Sigmoid colon (tissue), 7 donors: ENCODE measurements at regions of chrX and their contacts with region 1.

Region 1: DNA sequence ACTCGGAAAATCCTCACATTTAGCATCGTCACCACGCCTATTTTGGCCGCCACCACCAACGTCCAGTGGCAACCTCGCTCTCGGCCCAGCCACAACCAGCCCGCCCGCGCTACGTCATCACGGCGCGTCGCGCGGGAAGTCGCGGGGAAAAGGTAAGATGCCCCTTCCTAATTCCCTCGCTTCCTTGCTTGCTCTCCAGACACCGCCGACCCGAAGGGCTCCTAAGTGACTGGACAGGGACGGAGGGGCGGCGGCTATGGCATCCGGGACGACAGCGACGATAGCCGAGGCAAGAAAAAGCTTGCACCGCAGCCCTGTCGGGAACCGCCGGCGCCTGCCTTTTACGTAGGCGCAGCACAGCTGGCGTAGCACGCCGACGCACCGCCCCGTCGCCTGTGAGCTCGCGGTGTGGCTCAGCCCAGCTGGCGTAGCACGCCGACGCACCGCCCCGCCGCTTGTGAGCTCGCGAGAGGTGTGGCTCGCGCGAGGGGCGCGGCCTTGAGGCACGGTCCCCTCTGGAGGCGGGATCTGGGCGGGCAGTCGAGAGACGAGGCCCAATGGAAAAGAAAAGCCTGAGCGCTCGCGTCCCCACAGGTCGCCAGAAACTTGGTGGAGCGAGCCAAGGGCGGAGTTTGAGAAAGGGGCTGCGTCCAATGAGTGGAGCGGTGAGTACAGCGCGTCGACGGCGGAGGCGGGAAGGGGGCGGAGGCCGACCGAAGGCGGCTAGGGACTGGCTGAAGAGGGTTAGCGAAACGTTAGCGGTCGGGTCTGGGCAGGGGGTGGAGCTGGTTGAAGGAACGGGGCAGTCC is at the start of gene HDAC6:
- DNase-seq: peak; percentile 99
- H3K4me3 ChIP-seq: peak within 1 kb of the TSS; percentile 45 to 61 (median 56)
- H3K27ac ChIP-seq: peak within 1 kb of the TSS; percentile 86 to 93 (median 92)
- H3K4me1 ChIP-seq: peaks cover 0 to 8% (median 2%) of the 10 kb centered on the region in 4 donors
- H3K27me3 ChIP-seq: no peaks in the 10 kb centered on the region
- CTCF ChIP-seq: no peak
- EP300 ChIP-seq: peak in 1 of 4 donors; percentile 0
- POLR2A ChIP-seq: peak; percentile 20 to 30
- total RNA-seq, gene HDAC6: 39.6 to 110 (median 78.3) TPM

Region 2: DNA sequence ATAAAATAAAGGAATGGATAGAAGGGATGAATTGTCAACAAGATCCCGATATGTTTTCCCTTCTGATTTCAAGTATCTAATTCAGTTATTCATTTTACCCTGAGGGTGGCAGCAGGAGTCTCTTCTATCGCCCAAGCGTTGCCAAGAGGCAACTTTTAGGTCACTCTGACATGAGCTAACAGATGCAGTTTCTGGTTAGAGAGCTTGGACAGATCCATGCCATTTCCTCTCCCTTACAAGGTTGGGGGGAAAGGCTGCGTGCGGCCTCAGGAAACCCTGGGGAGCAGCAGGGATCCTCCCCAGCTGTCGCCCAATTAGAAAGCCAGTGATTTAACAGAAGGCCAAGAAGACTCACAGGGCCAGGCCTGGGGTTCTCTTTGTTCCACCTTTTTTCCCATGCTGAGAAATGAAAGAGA is 153.1 kb before region 1 on chrX:
- intact Hi-C with region 1: loop called (anchors 10 kb)
- DNase-seq: peak; percentile 74
- H3K4me3 ChIP-seq: no peak overlapping the region
- H3K27ac ChIP-seq: peak overlapping the region; percentile 17 to 67 (median 53)
- H3K4me1 ChIP-seq: no peaks in the 10 kb centered on the region
- H3K27me3 ChIP-seq: no peaks in the 10 kb centered on the region
- CTCF ChIP-seq: peak in 3 of 4 experiments; percentile 11 to 38 (median 21)
- EP300 ChIP-seq: no peak
- POLR2A ChIP-seq: no peak

Region 3: GRCh38 chrX:48696301-48697181 is 104.9 kb before region 1 on chrX and contains the start of gene SUV39H1:
- intact Hi-C with region 1: loop called (anchors 5 kb)
- DNase-seq: peak; percentile 94
- H3K4me3 ChIP-seq: peak within 1 kb of the TSS; percentile 42 to 74 (median 70)
- H3K27ac ChIP-seq: peak within 1 kb of the TSS; percentile 82 to 89 (median 88)
- H3K4me1 ChIP-seq: peaks cover 0 to 14% (median 12%) of the 10 kb centered on the region in 4 donors
- H3K27me3 ChIP-seq: no peaks in the 10 kb centered on the region
- CTCF ChIP-seq: no peak
- EP300 ChIP-seq: no peak
- POLR2A ChIP-seq: peak; percentile 71 to 75
- total RNA-seq, gene SUV39H1: 3.0 to 4.6 (median 3.7) TPM

Region 4: DNA sequence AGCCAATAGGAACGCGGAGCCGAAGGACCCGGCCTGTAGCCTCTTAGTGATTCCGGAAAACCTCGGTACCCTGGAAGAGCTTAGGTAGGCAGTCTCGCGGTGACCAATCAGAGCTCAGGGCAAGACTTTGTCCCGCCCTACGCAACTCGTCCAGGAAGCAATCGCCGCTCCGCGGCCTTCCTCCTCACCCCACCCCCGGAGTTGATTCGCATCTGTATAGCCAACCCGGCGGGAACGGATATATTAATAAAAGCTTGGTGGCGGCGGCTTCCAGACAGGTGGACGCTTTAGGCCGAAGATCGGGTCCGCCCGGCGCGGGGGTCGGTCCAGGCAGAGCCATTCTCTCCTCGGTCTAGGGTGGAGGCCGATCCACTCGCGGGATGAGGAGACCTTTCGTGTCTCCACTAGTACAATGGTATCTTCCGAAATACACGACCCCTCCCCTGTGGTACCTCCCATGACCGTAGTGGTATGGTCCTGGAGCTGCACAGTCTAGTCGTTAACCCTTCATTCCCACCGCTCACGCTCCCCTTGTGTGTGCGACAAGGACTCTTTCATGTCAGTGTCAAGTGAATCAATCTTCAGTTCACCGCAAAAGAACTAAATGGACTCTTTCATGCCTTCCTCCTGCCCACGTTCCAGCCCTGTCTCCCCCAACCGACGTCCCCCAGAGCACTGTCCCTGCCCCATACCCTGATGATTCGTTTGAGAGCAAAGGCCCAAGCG is 64.1 kb before region 1 on chrX:
- intact Hi-C with region 1: loop called (anchors 1 kb)
- DNase-seq: peak; percentile 97
- H3K4me3 ChIP-seq: peak overlapping the region; percentile 37 to 61 (median 56)
- H3K27ac ChIP-seq: peak overlapping the region; percentile 83 to 93 (median 86)
- H3K4me1 ChIP-seq: peaks cover 0 to 6% (median 2%) of the 10 kb centered on the region in 4 donors
- H3K27me3 ChIP-seq: no peaks in the 10 kb centered on the region
- CTCF ChIP-seq: no peak
- EP300 ChIP-seq: no peak
- POLR2A ChIP-seq: peak; percentile 57 to 66

Region 5: DNA sequence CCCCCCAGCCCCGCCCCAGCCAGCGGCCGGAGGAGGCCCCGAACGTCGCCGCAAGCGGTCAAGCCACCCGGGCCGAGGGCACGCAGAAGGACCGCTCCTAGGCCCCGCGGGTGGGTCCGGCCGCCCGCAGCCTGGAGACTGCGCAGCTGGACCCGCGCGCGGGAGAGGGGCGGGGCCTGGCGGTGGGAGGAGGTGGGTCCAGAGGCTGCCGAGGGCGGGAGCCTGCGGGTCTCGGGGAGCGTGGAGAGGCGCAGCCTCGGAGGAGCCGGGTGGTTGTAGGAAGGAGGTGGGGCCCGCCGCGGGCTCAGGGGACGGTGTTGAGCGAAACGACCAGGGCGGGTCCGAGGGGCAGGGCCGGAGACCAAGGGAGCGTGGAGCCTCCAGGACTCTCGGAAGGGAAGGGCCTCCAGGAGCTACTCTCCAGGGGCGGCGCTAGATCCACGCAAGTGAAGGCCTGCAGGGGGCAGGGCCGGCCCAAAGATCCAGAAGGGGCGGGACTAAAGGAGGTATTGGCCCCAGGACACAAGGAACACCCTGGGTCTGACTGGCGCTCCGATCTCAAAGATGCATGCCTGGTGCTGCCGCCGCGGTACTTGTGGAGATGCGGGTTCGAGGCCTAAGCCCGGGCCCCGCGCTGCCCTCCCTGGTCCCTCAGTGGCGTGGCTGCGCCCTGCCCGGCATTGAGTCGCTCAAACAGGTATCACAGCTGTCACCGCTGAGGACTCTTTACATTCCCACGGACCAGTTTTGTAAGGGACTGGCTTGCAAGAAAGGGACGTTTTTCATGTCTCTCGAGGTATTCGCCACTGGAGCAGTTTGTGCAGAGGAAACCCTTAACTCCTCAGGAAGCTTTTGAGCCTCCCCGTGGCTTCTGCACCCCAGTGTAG is 90.2 kb after region 1 on chrX:
- intact Hi-C with region 1: loop called (anchors 2 kb)
- DNase-seq: peak; percentile 96
- H3K4me3 ChIP-seq: peak overlapping the region; percentile 63 to 67 (median 64)
- H3K27ac ChIP-seq: peak overlapping the region; percentile 80 to 85 (median 83)
- H3K4me1 ChIP-seq: peaks cover 0 to 19% (median 11%) of the 10 kb centered on the region in 4 donors
- H3K27me3 ChIP-seq: no peaks in the 10 kb centered on the region
- CTCF ChIP-seq: peak; percentile 15 to 45 (median 30)
- EP300 ChIP-seq: no peak
- POLR2A ChIP-seq: no peak

Region 6: DNA sequence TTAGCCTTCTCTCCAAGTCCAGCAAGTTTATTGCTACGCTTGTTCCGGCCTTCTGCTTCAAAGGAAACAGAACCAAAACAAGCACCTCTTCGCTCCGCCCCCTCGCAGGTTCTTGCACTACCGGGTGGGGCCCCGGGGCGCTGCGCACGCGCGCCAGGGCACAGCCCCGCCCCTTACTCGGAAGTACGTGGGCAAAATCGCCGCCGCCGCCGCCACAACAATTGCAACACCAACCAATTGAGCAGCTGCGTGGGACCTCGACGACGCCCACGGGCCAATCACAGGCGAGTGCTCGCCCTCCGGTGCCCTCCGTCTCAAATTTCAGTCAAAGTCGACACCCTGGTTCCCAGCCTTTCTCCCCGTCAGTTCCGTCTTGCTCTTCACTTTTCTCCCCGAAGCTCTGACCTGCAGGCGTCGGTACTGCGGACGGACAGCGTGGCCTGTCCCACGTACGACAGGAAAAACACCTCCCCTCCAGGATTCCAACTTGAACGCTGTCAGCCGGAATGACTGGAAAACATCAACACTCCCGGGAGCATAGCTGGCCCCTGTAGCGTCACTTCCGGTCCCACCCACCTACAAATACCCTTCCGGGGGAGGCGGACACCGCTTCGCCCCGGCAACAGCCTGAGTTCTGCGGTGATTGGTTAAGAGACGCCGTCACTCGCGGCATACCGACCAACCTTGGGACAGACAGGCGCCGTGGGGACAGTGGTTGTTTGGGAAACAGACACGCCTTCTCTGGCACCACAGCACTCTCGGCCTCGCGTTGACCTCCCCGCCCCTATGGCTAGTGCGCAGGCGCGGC is 156.5 kb after region 1 on chrX:
- intact Hi-C with region 1: loop called (anchors 5 kb)
- DNase-seq: peak; percentile 99
- H3K4me3 ChIP-seq: peak overlapping the region; percentile 45 to 71 (median 70)
- H3K27ac ChIP-seq: peak overlapping the region; percentile 89 to 90 (median 90)
- H3K4me1 ChIP-seq: peaks cover 0 to 43% (median 26%) of the 10 kb centered on the region in 4 donors
- H3K27me3 ChIP-seq: no peaks in the 10 kb centered on the region
- CTCF ChIP-seq: no peak
- EP300 ChIP-seq: no peak
- POLR2A ChIP-seq: peak; percentile 17 to 66

Region 7: GRCh38 chrX:49002091-49002935 is 200.8 kb after region 1 on chrX and contains the start of gene GRIPAP1:
- intact Hi-C with region 1: no loop called
- DNase-seq: peak; percentile 77
- H3K4me3 ChIP-seq: peak within 1 kb of the TSS; percentile 57 to 67 (median 63)
- H3K27ac ChIP-seq: peak within 1 kb of the TSS; percentile 69 to 84 (median 75)
- H3K4me1 ChIP-seq: peaks cover 0 to 9% (median 6%) of the 10 kb centered on the region in 4 donors
- H3K27me3 ChIP-seq: no peaks in the 10 kb centered on the region
- CTCF ChIP-seq: no peak
- EP300 ChIP-seq: no peak
- POLR2A ChIP-seq: peak; percentile 60 to 65
- total RNA-seq, gene GRIPAP1: 19.7 to 63.1 (median 29.7) TPM

Region 8: GRCh38 chrX:49019599-49020249 is 218.2 kb after region 1 on chrX:
- intact Hi-C with region 1: no loop called
- DNase-seq: no peak
- H3K4me3 ChIP-seq: no peak overlapping the region
- H3K27ac ChIP-seq: no peak overlapping the region
- H3K4me1 ChIP-seq: no peaks in the 10 kb centered on the region
- H3K27me3 ChIP-seq: no peaks in the 10 kb centered on the region
- CTCF ChIP-seq: no peak
- EP300 ChIP-seq: no peak
- POLR2A ChIP-seq: no peak